Right cardiac atrium (tissue), 5 donors: ENCODE measurements at regions of chr9 and their contacts with region 1.

Region 1: DNA sequence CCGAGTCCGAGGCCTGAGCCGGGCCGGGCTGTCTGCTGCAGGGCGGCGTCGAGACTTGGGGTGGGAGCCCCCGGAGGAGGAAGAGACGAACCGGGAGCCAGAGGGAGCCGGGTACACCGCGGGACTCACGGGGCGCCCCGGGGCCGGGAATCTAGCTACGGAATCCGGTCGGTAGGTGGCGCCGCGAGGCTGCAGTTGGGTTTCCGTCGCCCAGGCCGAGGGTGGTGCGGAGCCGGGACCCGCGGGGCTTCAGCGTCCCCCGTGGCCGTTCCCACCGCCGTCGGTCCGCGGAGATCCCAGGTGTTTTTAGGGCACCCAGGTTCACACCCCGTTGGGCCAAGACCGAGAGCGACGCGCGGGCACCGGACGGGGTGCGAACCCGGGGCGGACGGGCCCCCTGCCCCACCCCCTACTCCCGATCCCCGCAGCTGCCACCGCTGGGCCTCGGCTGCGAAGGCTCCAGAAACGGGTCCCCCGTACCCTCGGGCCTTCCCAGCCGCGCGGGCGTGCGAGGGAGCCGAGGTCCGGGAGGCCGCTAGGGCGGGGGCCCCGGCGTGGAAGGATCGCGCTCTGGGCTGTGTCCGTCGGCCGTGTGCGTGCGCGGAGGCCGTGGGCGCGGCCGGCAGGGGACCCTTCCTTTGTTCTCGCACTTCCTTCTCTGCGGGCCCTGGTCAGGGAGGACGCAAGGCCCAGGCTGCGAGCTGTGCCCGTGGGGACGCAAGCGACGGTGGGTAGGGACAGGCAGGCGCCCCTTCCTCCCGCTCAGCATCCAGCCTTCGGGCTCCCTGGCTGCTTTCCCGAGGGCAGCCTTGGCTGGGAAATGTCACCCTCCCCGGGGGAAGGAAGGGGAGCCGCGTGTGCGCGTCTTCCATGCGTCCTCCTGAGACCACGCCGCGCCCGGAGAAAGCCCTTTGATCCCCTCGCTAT is 146.6 kb downstream of the GAPVD1 start:
- DNase-seq: peak; percentile 79 to 93 (median 92)
- ATAC-seq: peak; percentile 90 to 92
- H3K4me3 ChIP-seq: peak overlapping the region; percentile 54
- H3K27ac ChIP-seq: no peak overlapping the region
- H3K4me1 ChIP-seq: no peaks in the 10 kb centered on the region
- H3K27me3 ChIP-seq: no peaks in the 10 kb centered on the region

Region 2: GRCh38 chr9:125227761-125228160 is 180.5 kb before region 1 on chr9:
- intact Hi-C with region 1: no loop called
- DNase-seq: no peak
- ATAC-seq: no peak
- H3K4me3 ChIP-seq: no peak overlapping the region
- H3K27ac ChIP-seq: no peak overlapping the region
- H3K4me1 ChIP-seq: no peaks in the 10 kb centered on the region
- H3K27me3 ChIP-seq: no peaks in the 10 kb centered on the region

Region 3: DNA sequence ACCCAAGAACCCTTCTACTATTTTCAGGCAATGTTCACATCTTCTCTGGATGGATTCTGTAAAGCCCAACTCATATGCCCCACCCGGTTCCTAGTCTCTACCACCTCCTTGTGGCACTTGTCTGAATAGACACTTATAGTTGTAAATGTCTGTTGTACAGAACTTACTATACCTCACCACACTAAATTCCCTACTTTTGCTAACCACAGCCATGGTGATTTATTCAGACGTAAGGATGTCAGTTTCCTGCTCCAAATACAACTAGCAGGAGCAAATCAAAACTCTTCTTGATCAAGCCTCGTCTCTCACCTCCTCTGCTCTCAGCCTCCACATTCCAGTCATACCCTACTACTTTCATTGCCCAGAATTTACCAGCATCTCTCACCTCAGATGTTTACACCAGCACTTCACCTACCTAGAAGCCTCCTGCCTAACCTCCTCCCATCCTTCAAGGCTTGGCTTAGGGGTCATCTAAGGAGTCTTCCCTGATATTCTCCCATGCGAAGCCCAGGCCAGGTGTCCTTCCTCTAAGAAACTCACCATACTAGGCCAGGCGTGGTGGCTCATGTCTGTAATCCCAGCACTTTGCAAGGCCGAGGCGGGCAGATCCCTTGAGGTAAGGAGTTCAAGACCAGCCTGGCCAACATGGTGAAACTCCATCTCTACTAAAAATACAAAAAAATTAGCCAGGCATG is 223.3 kb after region 1 on chr9:
- intact Hi-C with region 1: loop called in 3 of 4 experiments (anchors 2 to 10 kb)
- DNase-seq: peak in 1 of 3 donors; percentile 51
- ATAC-seq: peak; percentile 66 to 79
- H3K4me3 ChIP-seq: no peak overlapping the region
- H3K27ac ChIP-seq: no peak overlapping the region
- H3K4me1 ChIP-seq: peaks cover 3% of the 10 kb centered on the region
- H3K27me3 ChIP-seq: no peaks in the 10 kb centered on the region

Region 4: GRCh38 chr9:126219648-126220063 is 811.4 kb after region 1 on chr9:
- intact Hi-C with region 1: loop called in 2 of 4 experiments (anchors 5 to 10 kb)
- DNase-seq: no peak
- ATAC-seq: no peak
- H3K4me3 ChIP-seq: no peak overlapping the region
- H3K27ac ChIP-seq: no peak overlapping the region
- H3K4me1 ChIP-seq: no peaks in the 10 kb centered on the region
- H3K27me3 ChIP-seq: no peaks in the 10 kb centered on the region

Region 5: DNA sequence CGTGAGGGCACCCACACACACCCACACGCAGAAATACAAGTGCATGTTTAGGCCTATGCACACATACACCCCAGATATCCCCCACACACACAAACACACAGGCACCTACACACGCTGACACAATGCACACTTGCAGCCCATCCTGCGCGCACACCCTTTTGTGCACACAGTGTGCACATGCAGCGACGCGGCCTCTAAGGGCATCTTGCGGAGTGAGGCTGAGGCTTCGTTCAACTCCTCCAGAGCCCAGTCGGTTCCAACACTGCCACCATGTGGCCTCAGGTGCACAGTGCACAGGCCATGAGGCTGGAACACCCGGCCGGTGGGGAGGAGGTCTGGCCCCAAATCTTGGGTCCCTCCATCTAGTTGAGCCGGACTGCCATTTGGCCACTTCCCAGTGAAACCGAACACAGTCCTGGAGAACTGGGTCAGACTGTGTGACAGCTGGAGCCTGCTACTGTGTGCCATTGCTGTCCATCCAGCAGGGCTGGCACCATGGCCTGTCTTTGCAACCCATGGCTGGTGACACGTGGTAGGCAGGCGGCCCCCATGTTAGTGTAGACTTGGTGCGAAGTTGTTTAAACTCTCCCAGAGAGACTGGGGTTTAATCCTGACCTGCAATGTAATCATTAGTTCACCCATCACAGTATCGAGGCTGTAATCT is 820.7 kb after region 1 on chr9:
- intact Hi-C with region 1: loop called in 3 of 4 experiments (anchors 2 to 10 kb)
- DNase-seq: peak; percentile 65 to 89 (median 89)
- ATAC-seq: peak; percentile 86 to 87
- H3K4me3 ChIP-seq: no peak overlapping the region
- H3K27ac ChIP-seq: no peak overlapping the region
- H3K4me1 ChIP-seq: no peaks in the 10 kb centered on the region
- H3K27me3 ChIP-seq: no peaks in the 10 kb centered on the region